Posterior cingulate gyrus (tissue), 11 donors: ENCODE measurements at regions of chr16 and their contacts with region 1.

Region 1: DNA sequence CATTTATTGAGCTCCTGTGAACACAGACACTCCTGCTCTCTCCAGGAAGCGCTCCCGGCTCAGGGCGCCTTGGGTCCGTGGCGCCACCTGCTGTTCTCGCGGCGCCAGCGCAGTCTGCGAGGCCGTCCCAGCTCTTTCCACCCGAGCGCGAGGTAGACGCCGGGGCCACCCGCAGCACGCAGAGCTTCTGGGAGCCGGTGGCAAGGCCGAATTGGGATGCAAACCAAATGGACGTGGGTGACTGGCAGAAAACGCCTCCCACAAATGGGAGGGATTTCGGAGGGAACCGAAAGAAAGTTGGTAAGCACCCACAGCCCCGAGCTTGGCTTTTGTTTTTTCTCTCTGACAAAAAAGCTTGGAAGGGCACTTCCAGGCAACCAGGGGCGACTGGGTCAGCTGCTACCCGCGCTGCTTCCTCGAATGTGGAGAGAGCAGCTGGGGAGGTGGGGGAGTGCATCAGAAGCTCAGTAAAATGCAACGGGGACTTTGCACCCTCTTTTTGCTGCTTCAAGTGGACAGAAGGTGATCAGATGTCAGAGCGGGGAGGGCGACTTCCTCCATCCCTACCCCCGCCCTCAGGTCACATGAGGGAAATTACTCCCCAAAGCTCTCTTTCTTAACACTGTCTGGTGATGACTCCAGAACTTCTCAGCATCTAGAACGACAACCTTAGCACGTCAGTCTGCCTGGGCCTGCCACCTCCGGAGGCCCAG is 13.5 kb upstream of the N4BP1 start:
- DNase-seq: peak; percentile 67 to 97 (median 80)

Region 2: GRCh38 chr16:48276102-48276501 is 347.4 kb before region 1 on chr16:
- intact Hi-C with region 1: no loop called
- DNase-seq: peak in 1 of 10 donors; percentile 16

Region 3: GRCh38 chr16:48353565-48354163 is 269.8 kb before region 1 on chr16:
- intact Hi-C with region 1: loop called (anchors 5 kb)
- DNase-seq: peak in 4 of 10 donors; percentile 47 to 91 (median 64)

Region 4: GRCh38 chr16:48556913-48557351 is 66.5 kb before region 1 on chr16:
- intact Hi-C with region 1: loop called (anchors 5 kb)
- DNase-seq: no peak

Region 5: GRCh38 chr16:48596326-48596725 is 27.1 kb before region 1 on chr16:
- intact Hi-C with region 1: no loop called
- DNase-seq: no peak